HCT116 (cell line): ENCODE measurements at regions of chr7 and their contacts with region 1.

Region 1: DNA sequence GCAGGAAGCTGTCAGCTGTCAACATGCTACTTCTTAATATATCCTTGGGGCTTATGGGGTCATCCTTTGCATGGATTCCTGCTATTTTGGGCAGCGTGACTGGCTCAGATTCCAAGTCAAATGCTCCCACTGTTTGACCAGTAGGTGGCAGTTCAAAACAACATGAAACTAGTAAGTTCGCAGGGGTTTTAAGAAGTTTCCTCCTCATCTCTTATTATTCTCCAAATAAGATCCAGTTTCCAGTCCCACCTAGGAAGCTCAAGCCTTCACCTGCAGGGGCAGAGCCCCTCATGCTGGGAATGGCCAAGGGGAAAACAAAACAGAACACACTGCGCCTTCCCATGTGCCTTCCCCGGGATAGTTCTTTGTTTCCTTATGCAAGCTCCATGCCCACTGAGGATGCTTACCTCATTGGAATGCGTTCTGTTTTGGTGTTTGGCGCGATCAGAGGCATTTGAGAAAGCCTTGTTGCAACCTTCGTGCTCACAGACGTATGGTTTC is 259.8 kb downstream of the GLI3 start:
- DNase-seq: peak; percentile 12
- ATAC-seq: peak; percentile 49; the same call in 1 of the 2 replicates
- H3K4me3 ChIP-seq: no peak overlapping the region
- H3K27ac ChIP-seq: no peak overlapping the region
- H3K4me1 ChIP-seq: no peaks in the 10 kb centered on the region
- H3K27me3 ChIP-seq: peaks cover 27% of the 10 kb centered on the region
- CTCF ChIP-seq: peak; percentile 35 to 66 (median 65); a peak in 5 of 6 replicates
- POLR2A ChIP-seq: no peak
- RAD21 ChIP-seq: peak; percentile 50

Region 2: DNA sequence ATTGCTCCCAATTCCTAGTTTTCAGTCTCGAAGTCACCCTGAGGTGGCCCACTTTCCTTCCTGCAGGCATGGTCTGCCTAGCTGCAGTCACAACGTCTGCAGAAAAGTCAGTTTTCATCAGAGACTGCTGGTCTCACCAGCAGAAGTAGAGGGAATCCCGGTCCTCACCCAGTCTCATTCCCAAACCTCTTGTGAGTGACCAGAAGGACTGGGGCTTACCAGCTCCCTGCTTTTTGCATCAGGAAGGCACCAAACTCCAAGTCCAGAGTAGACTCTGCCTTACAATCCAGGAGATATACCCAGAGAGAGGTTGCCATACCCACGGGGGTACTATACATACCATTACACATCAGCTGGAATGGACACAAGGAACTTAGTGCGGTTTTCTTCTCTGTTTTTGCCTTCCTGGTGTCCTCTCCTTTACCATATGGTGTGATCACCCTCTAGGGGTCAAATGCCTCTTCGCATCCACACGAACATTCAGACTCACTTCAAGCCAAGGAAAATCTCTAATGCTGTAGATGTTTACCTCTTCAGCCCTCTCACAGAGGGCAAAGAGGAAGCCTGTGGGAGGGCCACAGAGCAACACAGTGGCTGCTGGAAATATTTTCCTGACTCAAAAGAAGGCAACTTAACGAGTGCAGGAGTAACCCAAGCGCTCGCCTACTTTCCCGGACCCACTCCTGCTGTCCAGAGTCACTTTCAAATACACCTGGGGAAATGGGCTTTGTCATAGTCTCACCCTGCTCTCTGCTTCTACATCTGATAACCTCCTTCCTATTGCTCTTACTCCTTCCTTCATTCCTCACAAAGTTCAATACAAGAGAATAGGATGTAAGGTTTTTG is 713.8 kb after region 1 on chr7:
- CTCF ChIA-PET with region 1: no interaction called
- POLR2A ChIA-PET with region 1: no interaction called
- RAD21 ChIA-PET with region 1: no interaction called
- intact Hi-C with region 1: loop called (anchors 10 kb)
- DNase-seq: peak; percentile 10
- ATAC-seq: peak; percentile 64
- H3K4me3 ChIP-seq: no peak overlapping the region
- H3K27ac ChIP-seq: no peak overlapping the region
- H3K4me1 ChIP-seq: no peaks in the 10 kb centered on the region
- H3K27me3 ChIP-seq: no peaks in the 10 kb centered on the region; the same call in 1 of the 2 replicates
- CTCF ChIP-seq: peak in 2 of 3 experiments; percentile 34 to 47; a peak in 4 of 6 replicates
- POLR2A ChIP-seq: no peak
- RAD21 ChIP-seq: peak; percentile 50

Region 3: GRCh38 chr7:42843205-42843800 is 866.1 kb after region 1 on chr7:
- CTCF ChIA-PET with region 1: interaction called, 14 read pairs
- POLR2A ChIA-PET with region 1: no interaction called
- RAD21 ChIA-PET with region 1: no interaction called
- intact Hi-C with region 1: loop called (anchors 2 kb)
- DNase-seq: peak; percentile 8
- ATAC-seq: peak; percentile 96
- H3K4me3 ChIP-seq: no peak overlapping the region
- H3K27ac ChIP-seq: no peak overlapping the region
- H3K4me1 ChIP-seq: no peaks in the 10 kb centered on the region
- H3K27me3 ChIP-seq: peaks cover 26% of the 10 kb centered on the region; the same call in 1 of the 2 replicates
- CTCF ChIP-seq: peak; percentile 43 to 47 (median 44); a peak in 5 of 6 replicates
- POLR2A ChIP-seq: no peak
- RAD21 ChIP-seq: peak; percentile 65

Region 4: GRCh38 chr7:42886129-42886528 is 908.9 kb after region 1 on chr7:
- CTCF ChIA-PET with region 1: interaction called, 3 read pairs
- POLR2A ChIA-PET with region 1: no interaction called
- RAD21 ChIA-PET with region 1: no interaction called
- intact Hi-C with region 1: loop called (anchors 10 kb)
- DNase-seq: no peak
- ATAC-seq: peak; percentile 63
- H3K4me3 ChIP-seq: no peak overlapping the region
- H3K27ac ChIP-seq: no peak overlapping the region
- H3K4me1 ChIP-seq: no peaks in the 10 kb centered on the region
- H3K27me3 ChIP-seq: no peaks in the 10 kb centered on the region; the same call in 1 of the 2 replicates
- CTCF ChIP-seq: peak; percentile 32 to 48 (median 41); a peak in 5 of 6 replicates
- POLR2A ChIP-seq: no peak
- RAD21 ChIP-seq: peak; percentile 57; the same call in 1 of the 2 replicates